GM12878 (cell line): ENCODE measurements at regions of chr6 and their contacts with region 1.

Region 1: DNA sequence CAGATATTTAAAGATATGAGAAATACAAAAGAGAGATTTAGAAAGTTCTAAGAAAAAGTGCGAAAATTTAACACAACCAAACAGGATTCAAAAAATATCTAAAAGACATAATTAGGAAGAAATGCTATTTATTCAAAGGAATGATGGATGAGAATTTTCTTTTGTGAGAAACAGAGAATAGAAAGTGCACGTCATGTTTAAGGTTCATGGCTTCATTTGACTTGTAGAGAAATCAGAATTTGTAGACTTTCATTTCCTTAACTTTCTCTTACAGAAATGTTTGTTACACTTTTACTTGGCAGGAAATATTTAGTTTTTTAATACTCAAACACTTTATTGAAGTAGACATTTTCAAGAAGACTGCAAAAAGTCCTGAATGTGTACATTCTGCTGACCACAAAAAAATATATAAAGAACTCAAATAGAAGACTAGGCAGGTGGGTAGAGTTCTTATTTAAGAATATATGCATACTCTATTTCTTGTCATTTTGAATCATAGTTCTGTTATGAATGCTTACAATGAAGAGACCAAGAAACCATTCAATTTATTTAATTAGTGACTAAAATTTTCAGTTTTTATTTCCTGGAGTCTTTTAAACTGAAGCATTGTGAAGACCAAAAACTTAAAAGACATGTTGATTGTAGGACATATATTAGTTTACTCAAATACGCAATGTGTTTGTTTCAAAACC is 710.5 kb upstream of the HS3ST5 start:
- DNase-seq: no peak
- ATAC-seq: peak; percentile 44
- H3K4me3 ChIP-seq: no peak overlapping the region
- H3K27ac ChIP-seq: no peak overlapping the region
- H3K4me1 ChIP-seq: no peaks in the 10 kb centered on the region
- H3K27me3 ChIP-seq: no peaks in the 10 kb centered on the region
- CTCF ChIP-seq: no peak
- EP300 ChIP-seq: no peak
- POLR2A ChIP-seq: no peak
- RAD21 ChIP-seq: no peak

Region 2: DNA sequence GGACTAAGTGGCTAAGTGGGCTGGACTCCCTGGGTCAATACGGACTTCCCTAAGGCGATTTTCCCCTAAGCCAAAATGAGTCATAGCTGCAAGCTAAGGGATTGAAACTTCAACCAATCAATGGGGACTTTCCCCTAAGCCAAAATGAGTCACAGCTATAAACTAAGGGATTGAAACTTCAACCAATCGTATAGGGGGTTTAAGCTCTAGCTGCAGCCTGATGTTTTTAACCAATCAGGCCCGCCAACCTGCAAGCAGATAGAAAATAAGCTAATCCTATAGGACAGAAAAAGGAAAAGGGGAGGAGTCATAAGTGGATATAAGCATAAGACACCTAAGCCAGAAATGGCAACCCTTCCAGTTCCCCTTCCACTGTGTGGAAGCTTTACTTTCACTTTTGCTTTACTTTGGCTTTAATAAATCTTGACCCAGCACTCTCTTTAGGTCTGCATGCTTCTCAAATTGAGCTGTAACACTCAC is 55.5 kb before region 1 on chr6:
- CTCF ChIA-PET with region 1: no interaction called
- POLR2A ChIA-PET with region 1: no interaction called
- RAD21 ChIA-PET with region 1: interaction called, 3 read pairs
- SMC1A ChIA-PET with region 1: no interaction called
- in situ Hi-C with region 1: no loop called
- intact Hi-C with region 1: loop called (anchors 2 kb)
- DNase-seq: peak; percentile 57
- ATAC-seq: peak; percentile 80
- H3K4me3 ChIP-seq: no peak overlapping the region; the same call in 1 of the 2 replicates
- H3K27ac ChIP-seq: peak overlapping the region; percentile 57
- H3K4me1 ChIP-seq: no peaks in the 10 kb centered on the region
- H3K27me3 ChIP-seq: no peaks in the 10 kb centered on the region
- CTCF ChIP-seq: no peak
- EP300 ChIP-seq: peak in 1 of 2 experiments; percentile 59; a peak in 1 of 4 replicates
- POLR2A ChIP-seq: no peak
- RAD21 ChIP-seq: no peak